Activated T-helper 1 cell treated with anti-CD3 and anti-CD28 coated beads, Interleukin-12 subunit alpha, Interleukin-12 subunit beta, Interleukin-2, Interleukin-4 antibody, amounts not matched to agents 30 ng/mL and 10 ng/mL and 1 ng/mL, durations not matched to agents 14 hours and 24 hours and 36 hours (primary cell): ENCODE measurements at regions of chr18 and their contacts with region 1.

Region 1: GRCh38 chr18:44358402-44358801 is 322.3 kb upstream of the SETBP1 start:
- DNase-seq: no peak
- H3K4me3 Mint-ChIP-seq: no peak overlapping the region
- H3K27ac Mint-ChIP-seq: no peak overlapping the region
- H3K4me1 Mint-ChIP-seq: no peaks in the 10 kb centered on the region
- H3K27me3 Mint-ChIP-seq: no peaks in the 10 kb centered on the region

Region 2: GRCh38 chr18:44229693-44230108 is 128.7 kb before region 1 on chr18:
- intact Hi-C with region 1: no loop called
- DNase-seq: no peak
- H3K4me3 Mint-ChIP-seq: no peak overlapping the region
- H3K27ac Mint-ChIP-seq: no peak overlapping the region
- H3K4me1 Mint-ChIP-seq: no peaks in the 10 kb centered on the region
- H3K27me3 Mint-ChIP-seq: no peaks in the 10 kb centered on the region

Region 3: GRCh38 chr18:44265437-44265836 is 93.0 kb before region 1 on chr18:
- intact Hi-C with region 1: no loop called
- DNase-seq: no peak
- H3K4me3 Mint-ChIP-seq: no peak overlapping the region
- H3K27ac Mint-ChIP-seq: no peak overlapping the region
- H3K4me1 Mint-ChIP-seq: no peaks in the 10 kb centered on the region
- H3K27me3 Mint-ChIP-seq: no peaks in the 10 kb centered on the region

Region 4: GRCh38 chr18:44374966-44375365 is 16.6 kb after region 1 on chr18:
- intact Hi-C with region 1: no loop called
- DNase-seq: no peak
- H3K4me3 Mint-ChIP-seq: no peak overlapping the region
- H3K27ac Mint-ChIP-seq: no peak overlapping the region
- H3K4me1 Mint-ChIP-seq: no peaks in the 10 kb centered on the region
- H3K27me3 Mint-ChIP-seq: no peaks in the 10 kb centered on the region

Region 5: GRCh38 chr18:44548291-44549221 is 190.2 kb after region 1 on chr18:
- intact Hi-C with region 1: loop called (anchors 5 kb)
- DNase-seq: no peak
- H3K4me3 Mint-ChIP-seq: no peak overlapping the region
- H3K27ac Mint-ChIP-seq: no peak overlapping the region
- H3K4me1 Mint-ChIP-seq: peaks cover 9% of the 10 kb centered on the region
- H3K27me3 Mint-ChIP-seq: no peaks in the 10 kb centered on the region